ENCODE measurements at regions of chr11 and their contacts with region 1.

Region 1: DNA sequence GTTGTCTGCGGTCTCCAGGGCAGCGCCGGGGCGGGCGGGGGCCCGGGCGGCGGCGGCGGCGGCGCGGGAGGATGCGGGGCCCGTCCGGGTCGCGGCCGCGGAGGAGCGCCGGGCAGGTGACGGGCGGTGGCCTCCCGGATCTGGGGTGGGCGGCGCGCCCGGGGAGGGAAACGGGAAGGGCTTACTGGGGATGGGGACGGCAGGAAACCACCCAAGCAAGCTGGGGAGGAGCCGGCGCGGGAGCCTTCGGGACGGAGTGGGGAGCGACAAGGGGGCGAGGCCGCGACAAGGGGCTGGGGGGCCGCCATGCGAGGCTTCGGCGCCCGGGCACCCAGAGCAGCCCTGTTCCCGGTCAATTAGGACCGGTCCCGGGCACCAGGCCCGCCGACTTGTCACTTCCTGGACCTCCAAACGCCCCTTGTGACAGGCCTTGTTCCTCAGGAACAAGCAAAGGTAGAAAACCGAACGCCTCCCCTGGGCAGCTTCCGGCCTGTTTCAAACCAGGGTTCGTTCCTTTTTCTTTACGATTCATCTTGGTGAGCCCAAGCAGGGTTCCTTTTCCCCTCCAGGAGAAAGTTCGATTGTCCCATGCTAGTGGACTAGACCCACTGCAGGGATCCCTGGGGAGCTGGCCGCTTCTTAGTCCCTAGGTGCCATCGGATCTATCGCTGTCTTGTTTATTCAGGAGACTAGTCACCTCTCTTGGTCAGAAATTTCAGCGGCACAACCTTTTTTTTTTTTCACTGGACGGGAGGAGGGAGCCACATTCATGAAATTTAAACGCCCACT is 492 bp downstream of the JHY start:
- DNase-seq: peak; percentile 54
- ATAC-seq: peak; percentile 73
- H3K4me3 Mint-ChIP-seq: peak overlapping the region; percentile 85
- H3K27ac Mint-ChIP-seq: peak overlapping the region; percentile 59
- H3K4me1 Mint-ChIP-seq: peaks cover 10% of the 10 kb centered on the region
- H3K27me3 Mint-ChIP-seq: peaks cover 16% of the 10 kb centered on the region
- CTCF ChIP-seq: no peak

Region 2: GRCh38 chr11:122981388-122982264 is 98.6 kb after region 1 on chr11 and contains the start of gene BSX:
- CTCF ChIA-PET with region 1: no interaction called
- POLR2A ChIA-PET with region 1: no interaction called
- intact Hi-C with region 1: loop called (anchors 2 kb)
- DNase-seq: no peak
- ATAC-seq: peak; percentile 25
- H3K4me3 Mint-ChIP-seq: no peak within 1 kb of the TSS
- H3K27ac Mint-ChIP-seq: no peak within 1 kb of the TSS
- H3K4me1 Mint-ChIP-seq: peaks cover 36% of the 10 kb centered on the region
- H3K27me3 Mint-ChIP-seq: peaks cover 78% of the 10 kb centered on the region
- CTCF ChIP-seq: no peak
- total RNA-seq, gene BSX: not detected in 2 replicates